ENCODE measurements at regions of chr3 and their contacts with region 1.

Region 1: GRCh38 chr3:38126121-38126837 is 10.6 kb downstream of the ACAA1 start:
- DNase-seq: peak in 1 of 10 donors; percentile 47
- ATAC-seq: no peak
- H3K4me3 Mint-ChIP-seq: no peak overlapping the region
- H3K27ac Mint-ChIP-seq: peak overlapping the region in 7 of 10 donors; percentile 25 to 67 (median 43)
- H3K4me1 Mint-ChIP-seq: peaks cover 5 to 30% (median 12%) of the 10 kb centered on the region in 4 donors
- H3K27me3 Mint-ChIP-seq: no peaks in the 10 kb centered on the region

Region 2: DNA sequence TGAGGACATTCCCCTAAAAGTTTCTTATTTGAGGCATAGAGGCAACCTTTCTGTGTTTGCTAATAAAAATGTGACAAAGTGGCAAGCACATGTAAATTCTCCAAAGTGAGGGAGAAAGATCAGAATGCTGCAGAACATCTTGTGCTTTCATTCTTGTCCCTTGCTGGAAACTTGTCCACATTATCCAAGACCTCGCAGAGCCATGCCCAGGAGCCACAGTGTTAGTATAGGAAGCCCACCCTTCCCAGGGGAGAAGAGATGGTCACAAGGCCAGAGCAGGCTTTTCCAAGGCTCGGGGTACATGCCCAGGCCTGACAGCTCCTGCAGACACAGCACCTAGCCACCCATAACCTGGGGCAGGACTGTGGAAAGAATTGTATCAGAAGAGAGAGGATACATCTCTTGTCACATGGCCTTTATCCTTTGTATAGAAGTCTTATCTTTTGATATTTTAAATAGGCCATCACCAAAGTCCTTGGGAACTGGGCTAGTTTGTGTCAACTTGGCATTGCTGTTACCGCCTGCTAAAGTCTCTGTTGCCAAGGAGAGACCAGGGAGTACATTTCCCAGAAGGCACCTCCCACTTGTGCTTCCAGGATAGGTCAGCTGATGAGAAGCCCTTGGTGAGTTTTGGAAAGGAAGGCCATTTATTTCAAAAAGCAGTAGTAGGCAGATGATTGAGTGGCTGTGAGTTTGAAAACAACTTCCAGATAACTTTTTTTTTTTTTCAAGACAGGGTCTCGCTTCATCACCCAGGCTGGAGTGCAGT is 76.7 kb before region 1 on chr3:
- POLR2A ChIA-PET with region 1: interaction called, 10 read pairs
- DNase-seq: no peak
- ATAC-seq: no peak
- H3K4me3 Mint-ChIP-seq: no peak overlapping the region
- H3K27ac Mint-ChIP-seq: no peak overlapping the region
- H3K4me1 Mint-ChIP-seq: peaks cover 0 to 2% (median 0%) of the 10 kb centered on the region in 4 donors
- H3K27me3 Mint-ChIP-seq: no peaks in the 10 kb centered on the region

Measured in naive thymus-derived CD8-positive, alpha-beta T cell (primary cell).